Activated CD8-positive, alpha-beta T cell treated with anti-CD3 and anti-CD28 coated beads, Interleukin-2, amount 10 ng/mL, durations not matched to agents 7 days and 5 days (primary cell): ENCODE measurements at regions of chr15 and their contacts with region 1.

Region 1: DNA sequence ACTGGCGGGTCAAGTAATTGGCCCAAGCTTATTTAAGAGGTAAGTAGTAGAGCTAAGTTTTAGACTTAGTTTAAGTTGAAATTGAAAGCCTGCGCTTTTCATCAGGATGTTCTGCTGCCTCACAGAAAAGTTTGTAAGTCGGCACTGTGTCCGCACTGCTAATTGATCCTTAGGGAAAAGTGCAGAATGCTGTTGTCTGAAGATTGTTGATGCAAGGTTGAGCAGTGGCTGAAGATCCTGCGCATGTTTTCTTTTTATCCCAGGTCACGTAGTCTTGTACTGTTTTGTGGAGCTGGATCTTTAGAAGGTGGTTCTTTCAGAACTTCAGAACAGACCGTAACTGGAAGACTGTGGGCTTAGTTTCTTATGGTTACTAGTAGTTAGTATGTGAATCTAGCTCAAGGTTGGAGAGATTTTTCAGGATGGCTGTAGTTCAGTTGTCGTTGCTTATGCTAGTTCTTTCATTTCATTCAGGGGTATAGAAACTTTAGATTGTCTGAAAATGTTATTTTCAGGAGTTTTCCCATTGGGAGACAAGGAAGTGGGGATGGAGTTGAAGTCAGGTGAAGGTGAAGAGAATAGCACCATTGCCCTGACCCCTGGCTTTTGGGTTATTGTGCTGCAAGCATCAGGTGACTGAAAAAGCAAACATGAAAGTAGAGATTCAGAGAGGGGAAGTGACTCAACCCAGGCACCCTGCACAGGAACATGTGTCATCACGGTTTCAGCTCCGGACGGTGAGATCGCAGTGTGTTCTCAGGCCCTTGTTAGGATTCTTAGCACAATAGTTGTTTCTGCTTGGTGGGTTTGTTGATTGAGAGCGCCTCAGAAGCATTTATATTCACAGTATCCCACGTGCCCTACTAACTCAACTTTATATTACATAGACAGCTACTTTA is 32.8 kb downstream of the AKAP13 start:
- DNase-seq: peak; percentile 87
- ATAC-seq: peak; percentile 99
- H3K4me3 Mint-ChIP-seq: peak overlapping the region; percentile 32
- H3K27ac Mint-ChIP-seq: peak overlapping the region; percentile 68
- H3K4me1 Mint-ChIP-seq: peaks cover 62% of the 10 kb centered on the region
- H3K27me3 Mint-ChIP-seq: no peaks in the 10 kb centered on the region

Region 2: DNA sequence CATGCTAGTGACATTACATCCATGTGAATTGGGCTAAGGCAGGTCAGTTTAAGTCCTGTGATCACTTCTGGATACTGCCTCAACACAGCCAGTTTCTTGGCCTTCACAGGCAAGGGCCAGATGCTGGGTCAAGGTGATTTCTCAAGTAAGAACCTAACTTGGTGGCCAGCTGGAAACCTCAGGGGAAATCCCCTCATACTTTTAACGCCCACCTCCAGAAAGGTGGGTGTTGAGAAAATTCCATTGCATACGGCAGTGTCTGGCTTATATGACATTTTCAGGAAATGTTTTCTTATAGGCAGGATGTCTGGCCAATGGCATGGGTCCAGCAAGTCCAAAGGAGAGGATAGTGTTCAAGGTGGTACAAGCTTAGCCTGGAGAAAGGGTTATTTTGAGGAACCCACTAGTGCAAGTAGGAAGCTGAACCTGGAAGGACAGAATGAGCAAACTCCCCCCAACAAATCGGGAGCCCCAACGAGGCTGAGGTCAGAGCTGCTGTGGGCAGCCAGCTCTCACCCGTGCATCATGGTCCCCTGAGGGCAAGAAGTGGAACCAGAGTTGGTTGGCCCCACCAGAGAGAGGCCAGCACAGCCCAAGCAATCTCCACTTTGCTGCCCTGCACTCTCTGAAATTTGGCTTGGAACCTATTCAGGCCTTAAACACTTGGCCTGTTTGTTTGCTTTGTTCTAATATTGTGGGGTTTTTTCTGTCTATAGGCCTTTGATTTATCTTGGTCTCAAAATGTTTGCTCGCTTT is 296.1 kb before region 1 on chr15:
- CTCF ChIA-PET with region 1: no interaction called
- POLR2A ChIA-PET with region 1: no interaction called
- DNase-seq: no peak
- ATAC-seq: no peak
- H3K4me3 Mint-ChIP-seq: no peak overlapping the region
- H3K27ac Mint-ChIP-seq: no peak overlapping the region
- H3K4me1 Mint-ChIP-seq: no peaks in the 10 kb centered on the region
- H3K27me3 Mint-ChIP-seq: no peaks in the 10 kb centered on the region

Region 3: GRCh38 chr15:85296615-85297402 is 116.4 kb before region 1 on chr15:
- CTCF ChIA-PET with region 1: interaction called, 111 read pairs
- POLR2A ChIA-PET with region 1: no interaction called
- DNase-seq: peak; percentile 85
- ATAC-seq: peak; percentile 97
- H3K4me3 Mint-ChIP-seq: peak overlapping the region; percentile 27
- H3K27ac Mint-ChIP-seq: peak overlapping the region; percentile 15
- H3K4me1 Mint-ChIP-seq: peaks cover 17% of the 10 kb centered on the region
- H3K27me3 Mint-ChIP-seq: peaks cover 7% of the 10 kb centered on the region

Region 4: GRCh38 chr15:85330901-85331588 is 82.2 kb before region 1 on chr15:
- CTCF ChIA-PET with region 1: interaction called, 111 read pairs
- POLR2A ChIA-PET with region 1: interaction called, 9 read pairs
- DNase-seq: peak; percentile 90
- ATAC-seq: peak; percentile 84
- H3K4me3 Mint-ChIP-seq: peak overlapping the region; percentile 81
- H3K27ac Mint-ChIP-seq: peak overlapping the region; percentile 92
- H3K4me1 Mint-ChIP-seq: peaks cover 46% of the 10 kb centered on the region
- H3K27me3 Mint-ChIP-seq: no peaks in the 10 kb centered on the region

Region 5: DNA sequence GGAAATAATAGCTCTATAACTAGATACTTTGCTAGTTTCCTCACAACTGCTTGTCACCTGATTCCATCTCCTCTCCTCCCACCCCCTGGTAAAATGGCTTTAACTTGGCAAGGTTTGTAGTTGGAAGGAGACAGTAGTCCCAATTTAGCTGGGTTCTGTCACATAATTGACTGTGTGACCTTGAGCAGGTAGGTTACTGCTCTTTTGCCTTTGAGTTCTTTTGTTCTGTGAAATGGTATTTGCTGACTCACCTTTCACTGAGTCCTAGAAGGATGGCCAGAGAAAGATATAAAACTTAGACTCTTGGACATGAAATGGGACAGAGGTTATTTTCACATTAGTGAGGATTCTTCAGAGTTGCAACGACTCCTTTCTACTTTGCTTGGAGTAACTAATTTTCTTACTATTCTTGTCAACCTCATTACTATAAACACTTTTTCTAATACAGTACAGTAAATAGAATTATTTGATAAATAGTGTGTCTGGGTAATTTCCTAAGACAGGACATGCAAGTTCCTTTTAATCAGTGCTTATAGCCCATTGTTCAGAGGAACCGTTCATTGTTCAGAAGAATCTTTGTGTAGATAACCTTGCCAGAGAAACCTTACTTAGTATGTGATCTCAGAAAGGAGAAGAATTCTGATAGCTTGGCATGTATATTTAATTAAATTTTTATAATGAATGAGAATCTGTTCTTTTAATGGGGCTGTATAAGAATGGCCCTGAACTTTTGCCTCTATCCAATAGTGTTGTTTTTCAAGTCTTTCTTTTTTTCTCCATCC is 18.5 kb before region 1 on chr15:
- CTCF ChIA-PET with region 1: interaction called, 61 read pairs
- POLR2A ChIA-PET with region 1: no interaction called
- DNase-seq: no peak
- ATAC-seq: no peak
- H3K4me3 Mint-ChIP-seq: no peak overlapping the region
- H3K27ac Mint-ChIP-seq: no peak overlapping the region
- H3K4me1 Mint-ChIP-seq: peaks cover 10% of the 10 kb centered on the region
- H3K27me3 Mint-ChIP-seq: no peaks in the 10 kb centered on the region

Region 6: DNA sequence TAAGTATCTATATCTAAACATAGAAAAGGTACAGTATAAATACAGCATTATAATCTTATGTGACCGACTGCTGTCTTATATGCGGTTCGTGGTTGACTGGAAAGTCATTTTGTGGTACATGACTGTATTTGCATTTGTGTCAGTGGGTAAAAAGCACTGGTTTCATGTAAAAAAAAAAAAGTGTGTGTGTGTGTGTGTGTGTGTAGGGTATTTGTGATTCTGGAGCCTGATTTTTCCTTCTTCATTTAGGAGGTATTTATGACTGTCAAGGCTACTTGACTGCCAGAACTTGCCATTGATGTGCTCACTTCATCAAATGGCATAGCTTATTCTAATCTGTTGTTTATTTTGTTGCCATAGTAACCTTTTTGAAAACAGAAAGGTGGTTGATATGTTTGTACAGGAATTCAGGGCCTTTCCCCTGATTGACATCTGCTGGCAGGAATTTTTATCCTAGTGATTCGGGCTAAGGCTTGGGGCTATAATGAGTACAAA is 30.4 kb after region 1 on chr15:
- CTCF ChIA-PET with region 1: interaction called, 12 read pairs
- POLR2A ChIA-PET with region 1: no interaction called
- DNase-seq: peak; percentile 51
- ATAC-seq: peak; percentile 85
- H3K4me3 Mint-ChIP-seq: no peak overlapping the region
- H3K27ac Mint-ChIP-seq: no peak overlapping the region
- H3K4me1 Mint-ChIP-seq: peaks cover 22% of the 10 kb centered on the region
- H3K27me3 Mint-ChIP-seq: peaks cover 3% of the 10 kb centered on the region

Region 7: DNA sequence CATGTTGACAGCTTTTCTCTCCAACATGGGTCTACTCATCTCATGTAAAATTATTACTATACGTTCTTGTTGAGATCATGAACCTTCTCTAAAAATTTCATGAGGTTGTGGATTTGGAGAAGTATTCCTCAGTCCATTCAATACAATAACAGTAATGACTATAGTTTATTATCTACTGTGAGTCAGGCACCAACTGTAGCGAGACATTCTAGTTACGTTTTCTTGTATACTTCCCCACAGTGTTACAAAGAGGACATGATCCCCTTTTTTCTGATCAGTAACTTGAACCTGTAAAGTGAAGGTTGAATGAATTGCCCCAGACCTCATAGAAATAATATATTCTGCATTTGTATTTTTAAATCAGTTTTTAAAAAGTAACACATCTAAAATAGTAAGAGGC is 43.6 kb after region 1 on chr15:
- CTCF ChIA-PET with region 1: no interaction called
- POLR2A ChIA-PET with region 1: no interaction called
- DNase-seq: no peak
- ATAC-seq: no peak
- H3K4me3 Mint-ChIP-seq: no peak overlapping the region
- H3K27ac Mint-ChIP-seq: no peak overlapping the region
- H3K4me1 Mint-ChIP-seq: peaks cover 3% of the 10 kb centered on the region
- H3K27me3 Mint-ChIP-seq: no peaks in the 10 kb centered on the region